SK-N-SH (cell line): ENCODE measurements at regions of chr17 and their contacts with region 1.

Region 1: DNA sequence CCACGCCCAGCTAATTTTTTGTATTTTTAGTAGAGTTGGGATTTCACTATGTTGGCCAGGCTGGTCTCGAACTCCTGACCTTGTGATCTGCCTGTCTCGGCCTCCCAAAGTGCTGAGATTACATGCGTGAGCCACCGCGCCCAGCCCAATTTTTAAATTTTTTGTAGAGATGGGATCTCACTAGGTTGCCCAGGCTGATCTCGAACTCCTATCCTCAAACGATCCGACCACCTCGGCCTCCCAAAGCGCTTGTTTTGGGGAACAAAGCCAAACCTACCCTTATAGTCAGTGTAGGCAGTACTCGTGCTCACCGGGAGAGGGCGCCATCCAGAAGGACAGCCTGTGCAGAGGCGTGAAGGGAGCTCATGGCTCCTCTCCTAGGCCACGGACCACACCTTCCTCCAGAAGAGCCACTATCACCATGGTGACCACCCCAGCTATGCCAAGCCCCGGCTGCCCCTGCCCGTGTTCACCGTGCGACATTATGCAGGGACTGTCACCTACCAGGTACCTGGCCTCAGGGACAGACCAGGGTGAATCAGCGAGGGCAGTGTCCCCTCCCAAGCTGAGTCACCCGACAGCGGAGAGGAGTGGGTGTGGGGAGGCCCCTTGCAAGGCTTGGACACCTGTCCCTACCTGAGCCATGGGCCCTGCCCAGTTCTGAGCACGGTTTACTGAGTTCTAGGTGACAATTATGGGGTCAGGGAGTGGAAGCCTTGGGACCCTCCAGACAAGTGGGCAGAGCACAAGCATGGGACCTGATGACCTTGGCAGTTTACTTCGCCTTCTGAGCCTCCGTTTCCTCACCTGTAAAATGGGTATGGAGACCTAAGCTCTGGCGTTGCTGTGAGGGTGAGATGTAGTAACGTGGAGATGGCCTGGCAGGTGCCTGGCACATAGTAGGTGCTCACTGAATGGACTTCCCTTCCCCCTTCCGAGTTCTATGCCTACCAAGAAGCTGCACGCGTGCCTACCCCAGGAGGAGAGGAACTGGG is 13.8 kb downstream of the MYO15B start:
- DNase-seq: peak; percentile 83
- H3K4me3 ChIP-seq: no peak overlapping the region
- H3K27ac ChIP-seq: no peak overlapping the region
- H3K4me1 ChIP-seq: no peaks in the 10 kb centered on the region
- H3K27me3 ChIP-seq: no peaks in the 10 kb centered on the region
- CTCF ChIP-seq: peak; percentile 92
- EP300 ChIP-seq: no peak
- RAD21 ChIP-seq: peak; percentile 41

Region 2: DNA sequence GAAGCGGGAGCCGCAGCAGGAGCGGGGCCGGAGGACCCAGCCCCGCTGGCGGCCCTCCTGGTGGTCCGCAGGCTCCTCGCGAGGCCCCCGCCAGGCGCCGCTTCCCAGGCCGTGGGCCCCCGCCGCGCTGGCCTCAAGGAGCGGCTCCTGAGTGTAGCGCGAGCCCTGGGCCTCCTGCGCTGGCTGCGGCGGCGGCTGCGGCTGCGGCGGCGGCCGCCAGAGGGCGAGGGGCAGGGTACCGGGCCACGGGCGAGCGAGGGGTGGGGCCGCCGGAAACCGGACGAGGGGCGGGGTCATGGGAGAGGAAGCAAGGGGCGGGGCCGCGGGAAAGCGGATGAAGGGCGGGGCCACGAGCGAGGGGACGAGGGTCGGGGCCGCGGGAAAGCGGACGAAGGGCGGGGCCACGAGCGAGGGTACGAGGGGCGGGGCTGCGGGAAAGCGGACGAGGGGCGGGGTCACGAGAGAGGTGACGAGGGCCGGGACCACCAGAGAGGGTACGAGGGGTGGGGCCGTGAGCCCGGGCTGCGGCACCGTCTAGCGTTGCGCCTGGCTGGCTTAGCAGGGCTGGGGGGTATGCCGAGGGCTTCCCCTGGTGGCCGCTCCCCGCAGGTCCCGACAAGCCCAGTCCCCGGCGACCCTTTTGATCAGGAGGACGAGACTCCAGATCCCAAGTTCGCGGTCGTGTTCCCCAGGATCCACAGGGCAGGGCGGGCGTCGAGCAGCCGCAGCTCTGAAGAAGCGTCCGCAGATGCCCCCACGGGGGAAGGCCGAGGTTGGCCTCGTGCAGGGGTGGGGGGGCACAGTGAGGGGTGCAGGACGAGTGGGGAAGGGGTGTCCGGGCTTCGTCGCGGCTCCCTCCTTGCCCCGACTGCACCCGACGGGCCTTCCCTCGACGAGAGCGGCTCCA is 12.1 kb before region 1 on chr17:
- CTCF ChIA-PET with region 1: interaction called, 41 read pairs
- POLR2A ChIA-PET with region 1: no interaction called
- DNase-seq: peak; percentile 100
- H3K4me3 ChIP-seq: peak overlapping the region; percentile 62 to 64
- H3K27ac ChIP-seq: peak overlapping the region in 1 of 2 experiments; percentile 53; a peak in 1 of 4 replicates
- H3K4me1 ChIP-seq: peaks cover 0 to 16% of the 10 kb centered on the region in 2 experiments; a peak in 1 of 4 replicates
- H3K27me3 ChIP-seq: no peaks in the 10 kb centered on the region
- CTCF ChIP-seq: peak; percentile 60
- EP300 ChIP-seq: peak in 1 of 2 experiments; percentile 68; a peak in 1 of 4 replicates
- RAD21 ChIP-seq: peak; percentile 34

Region 3: DNA sequence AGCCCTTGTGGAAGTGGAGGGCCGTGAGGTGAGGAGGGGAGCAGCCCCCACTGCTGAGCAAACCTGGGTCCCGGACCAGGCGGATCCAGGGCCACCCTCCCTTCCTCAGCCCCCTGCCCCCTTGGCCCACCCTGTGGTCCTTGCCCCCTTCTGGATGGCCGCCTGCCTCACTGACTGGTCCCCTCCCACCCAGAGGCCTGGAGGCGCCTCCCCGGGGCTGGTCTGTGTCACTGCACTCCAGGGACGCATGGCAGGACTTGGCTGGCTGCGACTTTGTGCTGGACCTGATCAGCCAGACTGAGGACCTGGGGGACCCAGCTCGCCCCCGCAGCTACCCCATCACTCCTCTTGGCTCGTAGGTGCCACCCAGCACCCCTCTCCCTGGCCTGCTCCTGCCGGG is 12.7 kb after region 1 on chr17:
- CTCF ChIA-PET with region 1: interaction called, 42 read pairs
- POLR2A ChIA-PET with region 1: no interaction called
- DNase-seq: peak; percentile 78
- H3K4me3 ChIP-seq: no peak overlapping the region
- H3K27ac ChIP-seq: no peak overlapping the region
- H3K4me1 ChIP-seq: no peaks in the 10 kb centered on the region
- H3K27me3 ChIP-seq: no peaks in the 10 kb centered on the region
- CTCF ChIP-seq: peak; percentile 20; the same call in 1 of the 2 replicates
- EP300 ChIP-seq: no peak
- RAD21 ChIP-seq: no peak

Region 4: GRCh38 chr17:75619506-75620431 is 18.4 kb after region 1 on chr17:
- CTCF ChIA-PET with region 1: interaction called, 43 read pairs
- POLR2A ChIA-PET with region 1: interaction called, 3 read pairs
- DNase-seq: peak; percentile 89
- H3K4me3 ChIP-seq: no peak overlapping the region; a peak in 1 of 4 replicates
- H3K27ac ChIP-seq: no peak overlapping the region
- H3K4me1 ChIP-seq: peaks cover 0 to 24% of the 10 kb centered on the region in 2 experiments; a peak in 1 of 4 replicates
- H3K27me3 ChIP-seq: no peaks in the 10 kb centered on the region
- CTCF ChIP-seq: peak; percentile 73
- EP300 ChIP-seq: no peak
- RAD21 ChIP-seq: peak; percentile 41

Region 5: DNA sequence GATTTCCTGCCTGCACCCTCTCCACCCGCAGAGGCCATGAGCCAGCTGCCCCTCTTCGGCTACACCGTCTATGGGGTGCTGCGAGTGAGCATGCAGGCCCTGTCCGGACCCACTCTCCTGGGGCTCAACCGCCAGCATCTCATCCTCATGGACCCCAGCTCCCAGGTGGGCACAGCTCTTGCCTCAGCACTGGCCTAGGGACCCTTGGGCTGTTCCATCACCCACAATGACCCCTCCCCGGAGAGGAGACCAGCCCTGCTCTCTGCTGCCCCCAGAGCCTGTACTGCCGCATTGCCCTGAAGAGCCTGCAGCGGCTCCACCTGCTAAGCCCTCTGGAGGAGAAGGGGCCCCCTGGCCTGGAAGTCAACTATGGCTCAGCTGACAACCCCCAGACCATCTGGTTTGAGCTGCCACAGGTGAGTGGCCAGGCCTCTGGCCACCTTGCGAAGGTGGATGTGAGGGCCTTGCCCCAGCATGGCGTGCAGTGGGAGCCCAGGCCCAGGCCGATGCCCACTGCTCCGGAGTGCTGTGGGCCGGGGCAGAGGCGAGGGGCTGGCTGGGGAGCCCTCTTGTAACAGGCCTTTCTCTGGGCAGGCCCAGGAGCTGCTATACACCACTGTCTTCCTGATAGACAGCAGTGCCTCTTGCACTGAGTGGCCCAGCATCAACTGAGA is 24.6 kb after region 1 on chr17:
- CTCF ChIA-PET with region 1: interaction called, 43 read pairs
- POLR2A ChIA-PET with region 1: no interaction called
- DNase-seq: peak; percentile 92
- H3K4me3 ChIP-seq: no peak overlapping the region
- H3K27ac ChIP-seq: peak overlapping the region in 1 of 2 experiments; percentile 1; a peak in 1 of 4 replicates
- H3K4me1 ChIP-seq: peaks cover 0 to 23% of the 10 kb centered on the region in 2 experiments; a peak in 1 of 4 replicates
- H3K27me3 ChIP-seq: no peaks in the 10 kb centered on the region
- CTCF ChIP-seq: peak; percentile 79
- EP300 ChIP-seq: no peak
- RAD21 ChIP-seq: peak; percentile 23

Region 6: GRCh38 chr17:75652915-75653549 is 51.7 kb after region 1 on chr17:
- CTCF ChIA-PET with region 1: interaction called, 19 read pairs
- POLR2A ChIA-PET with region 1: no interaction called
- DNase-seq: peak; percentile 85
- H3K4me3 ChIP-seq: no peak overlapping the region
- H3K27ac ChIP-seq: no peak overlapping the region
- H3K4me1 ChIP-seq: no peaks in the 10 kb centered on the region
- H3K27me3 ChIP-seq: no peaks in the 10 kb centered on the region
- CTCF ChIP-seq: peak; percentile 87
- EP300 ChIP-seq: no peak
- RAD21 ChIP-seq: peak; percentile 68